ENCODE measurements at regions of chr12 and their contacts with region 1.

Region 1: GRCh38 chr12:5003020-5003666 is 40.5 kb upstream of the KCNA5 start:
- DNase-seq: peak; percentile 50
- H3K4me3 ChIP-seq: no peak overlapping the region
- H3K27ac ChIP-seq: no peak overlapping the region
- H3K4me1 ChIP-seq: no peaks in the 10 kb centered on the region
- H3K27me3 ChIP-seq: peaks cover 18% of the 10 kb centered on the region
- CTCF ChIP-seq: peak; percentile 79

Region 2: GRCh38 chr12:5200278-5201087 is 197.3 kb after region 1 on chr12:
- CTCF ChIA-PET with region 1: no interaction called
- POLR2A ChIA-PET with region 1: interaction called, 15 read pairs
- intact Hi-C with region 1: no loop called
- DNase-seq: peak; percentile 52
- H3K4me3 ChIP-seq: no peak overlapping the region
- H3K27ac ChIP-seq: no peak overlapping the region
- H3K4me1 ChIP-seq: no peaks in the 10 kb centered on the region
- H3K27me3 ChIP-seq: no peaks in the 10 kb centered on the region
- CTCF ChIP-seq: peak; percentile 79

Region 3: DNA sequence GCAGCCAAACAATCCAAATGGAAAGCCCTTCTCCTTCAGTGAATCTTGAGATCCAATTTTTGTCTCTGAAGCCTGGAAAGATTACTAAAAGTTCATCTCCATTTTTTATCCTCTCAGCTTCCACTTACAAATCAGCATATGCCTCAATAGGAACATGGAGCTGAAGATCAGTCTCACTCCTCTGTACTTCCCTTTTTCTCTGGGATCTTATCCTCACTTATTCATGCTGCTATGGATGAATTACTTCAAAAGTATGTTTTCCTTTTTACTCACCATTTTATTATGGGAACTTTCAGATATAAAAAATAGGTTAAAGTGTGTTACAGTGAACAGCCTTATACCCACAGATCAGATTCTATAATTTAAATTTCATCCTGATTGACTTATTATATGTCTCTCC is 414.4 kb after region 1 on chr12:
- CTCF ChIA-PET with region 1: no interaction called
- POLR2A ChIA-PET with region 1: no interaction called
- intact Hi-C with region 1: no loop called
- DNase-seq: no peak
- H3K4me3 ChIP-seq: no peak overlapping the region
- H3K27ac ChIP-seq: no peak overlapping the region
- H3K4me1 ChIP-seq: no peaks in the 10 kb centered on the region
- H3K27me3 ChIP-seq: peaks cover 15% of the 10 kb centered on the region
- CTCF ChIP-seq: no peak

Region 4: DNA sequence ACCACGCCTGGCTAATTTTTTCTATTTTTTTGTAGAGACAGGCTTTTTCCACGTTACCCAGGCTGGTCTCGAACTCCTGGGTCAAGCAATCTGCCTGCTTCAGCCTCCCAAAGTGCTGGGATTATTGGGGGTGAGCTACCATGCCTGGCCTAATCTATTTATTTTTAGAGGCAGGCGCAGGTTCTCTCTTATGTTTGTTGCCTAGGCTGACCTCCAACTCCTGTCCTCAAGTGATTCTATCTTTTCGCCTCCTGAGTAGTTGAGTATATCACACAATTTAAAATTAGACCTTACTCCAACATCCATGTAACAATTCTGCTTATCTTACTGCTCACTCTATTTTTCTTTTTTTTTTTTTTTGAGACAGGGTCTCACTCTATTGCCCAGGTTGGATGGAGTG is 1650.8 kb after region 1 on chr12:
- CTCF ChIA-PET with region 1: no interaction called
- POLR2A ChIA-PET with region 1: no interaction called
- intact Hi-C with region 1: no loop called
- DNase-seq: no peak
- H3K4me3 ChIP-seq: no peak overlapping the region
- H3K27ac ChIP-seq: no peak overlapping the region
- H3K4me1 ChIP-seq: no peaks in the 10 kb centered on the region
- H3K27me3 ChIP-seq: no peaks in the 10 kb centered on the region
- CTCF ChIP-seq: no peak

Measured in A673 (cell line).